ENCODE measurements at regions of chr1 and their contacts with region 1.

Region 1: DNA sequence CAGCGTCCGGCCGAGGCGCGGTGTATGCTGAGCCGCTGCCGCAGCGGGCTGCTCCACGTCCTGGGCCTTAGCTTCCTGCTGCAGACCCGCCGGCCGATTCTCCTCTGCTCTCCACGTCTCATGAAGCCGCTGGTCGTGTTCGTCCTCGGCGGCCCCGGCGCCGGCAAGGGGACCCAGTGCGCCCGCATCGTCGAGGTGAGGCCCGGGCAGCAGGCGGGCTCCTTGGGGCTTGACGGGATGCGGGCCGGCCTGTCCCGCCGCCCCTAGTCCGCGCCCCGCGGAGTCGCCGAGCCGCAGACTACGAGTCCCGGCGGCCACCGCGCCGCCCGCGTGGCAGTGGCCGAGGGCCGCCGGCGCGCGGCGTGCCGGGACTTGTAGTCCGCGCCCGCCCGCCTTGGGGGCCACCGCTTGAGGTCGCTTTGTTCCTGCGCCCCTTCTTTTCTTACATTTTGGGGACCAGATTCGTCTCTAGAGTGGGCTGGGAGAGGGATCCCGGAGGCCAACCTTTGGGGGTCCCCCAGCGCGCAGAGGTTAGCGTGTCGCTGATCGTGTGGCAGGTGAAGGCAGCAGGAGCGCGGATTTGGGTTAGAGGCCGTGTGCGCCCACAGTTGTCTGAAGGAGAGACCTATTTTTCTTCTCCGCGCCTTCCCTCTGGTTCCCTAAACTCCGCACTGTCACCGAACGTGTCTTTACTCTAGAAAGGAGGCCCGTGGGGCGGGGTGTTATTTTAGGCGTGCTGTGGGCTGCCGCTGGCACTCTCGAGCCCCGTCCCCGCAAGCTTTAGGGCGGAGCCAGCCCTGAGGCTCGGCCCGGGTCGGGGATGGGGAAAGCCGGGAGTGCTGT is 553 bp downstream of the CMPK1 start:
- DNase-seq: peak; percentile 85
- ATAC-seq: peak; percentile 90
- H3K4me3 Mint-ChIP-seq: no peak overlapping the region
- H3K27ac Mint-ChIP-seq: peak overlapping the region; percentile 88
- H3K4me1 Mint-ChIP-seq: peaks cover 23% of the 10 kb centered on the region
- H3K27me3 Mint-ChIP-seq: no peaks in the 10 kb centered on the region

Region 2: GRCh38 chr1:46603858-46604549 is 730.1 kb before region 1 on chr1 and contains the start of gene MKNK1:
- CTCF ChIA-PET with region 1: no interaction called
- POLR2A ChIA-PET with region 1: no interaction called
- intact Hi-C with region 1: loop called in 1 of 2 experiments (anchors 10 kb)
- DNase-seq: peak; percentile 99
- ATAC-seq: peak; percentile 98
- H3K4me3 Mint-ChIP-seq: peak within 1 kb of the TSS; percentile 87
- H3K27ac Mint-ChIP-seq: peak within 1 kb of the TSS; percentile 82
- H3K4me1 Mint-ChIP-seq: peaks cover 55% of the 10 kb centered on the region
- H3K27me3 Mint-ChIP-seq: no peaks in the 10 kb centered on the region
- total RNA-seq, gene MKNK1: 27.8 to 31.0 TPM

Region 3: DNA sequence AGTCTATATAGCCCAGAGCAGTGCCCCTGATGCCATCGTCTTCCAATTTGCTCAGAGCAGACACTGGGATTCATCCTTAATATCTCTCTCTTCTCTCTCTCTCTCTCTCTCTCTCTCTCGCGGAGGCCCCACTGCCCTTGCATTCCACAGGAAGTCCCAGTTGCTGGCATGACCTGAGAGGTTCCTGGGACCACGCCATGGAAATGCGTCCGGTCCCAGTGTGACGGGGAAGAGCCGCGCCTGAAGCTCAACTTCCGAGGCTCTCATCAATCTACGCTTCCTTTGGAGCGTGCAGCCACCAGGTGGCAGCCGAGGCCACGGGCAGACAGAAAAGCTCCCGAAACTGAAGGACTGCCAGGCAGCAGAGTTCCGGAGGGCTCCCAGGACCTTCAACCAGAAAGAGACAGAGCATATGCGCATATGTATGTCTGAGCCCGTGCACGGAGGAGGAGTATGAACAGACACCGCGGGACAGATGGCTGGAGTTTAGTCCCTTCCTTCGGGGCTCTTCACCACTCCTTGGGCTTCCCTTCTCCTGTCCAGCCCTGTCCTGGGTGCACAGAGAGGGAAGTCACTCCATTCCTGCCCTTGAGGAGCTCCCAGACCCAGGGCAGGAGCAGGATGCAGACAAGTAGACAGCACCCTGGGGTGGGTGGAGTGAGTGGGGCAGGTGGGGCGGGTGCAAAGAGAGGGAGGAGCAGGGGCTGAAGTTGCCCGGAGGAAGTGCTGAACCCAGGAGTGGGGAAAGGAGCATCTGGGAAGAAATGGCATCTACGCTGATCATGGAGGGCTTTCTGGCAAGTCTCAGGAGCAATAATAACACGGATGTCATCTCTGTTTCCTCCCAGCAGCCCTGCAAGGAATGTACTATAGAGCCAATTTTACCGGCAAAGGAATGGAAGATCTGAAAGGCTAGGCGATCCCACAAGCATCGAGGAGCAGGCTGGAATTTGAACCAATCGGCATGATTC is 154.8 kb before region 1 on chr1:
- CTCF ChIA-PET with region 1: interaction called, 4 read pairs
- POLR2A ChIA-PET with region 1: no interaction called
- intact Hi-C with region 1: loop called in 1 of 2 experiments (anchors 1 kb)
- DNase-seq: peak; percentile 91
- ATAC-seq: peak; percentile 90
- H3K4me3 Mint-ChIP-seq: peak overlapping the region; percentile 57
- H3K27ac Mint-ChIP-seq: no peak overlapping the region
- H3K4me1 Mint-ChIP-seq: peaks cover 8% of the 10 kb centered on the region
- H3K27me3 Mint-ChIP-seq: peaks cover 22% of the 10 kb centered on the region

Region 4: GRCh38 chr1:47313915-47314664 is 20.1 kb before region 1 on chr1 and contains the start of gene STIL:
- CTCF ChIA-PET with region 1: interaction called, 20 read pairs
- POLR2A ChIA-PET with region 1: interaction called, 31 read pairs
- intact Hi-C with region 1: loop called (anchors 1 kb)
- DNase-seq: peak; percentile 99
- ATAC-seq: peak; percentile 97
- H3K4me3 Mint-ChIP-seq: peak within 1 kb of the TSS; percentile 84
- H3K27ac Mint-ChIP-seq: peak within 1 kb of the TSS; percentile 92
- H3K4me1 Mint-ChIP-seq: peaks cover 10% of the 10 kb centered on the region
- H3K27me3 Mint-ChIP-seq: no peaks in the 10 kb centered on the region
- total RNA-seq, gene STIL: 33.9 to 36.0 TPM

Region 5: DNA sequence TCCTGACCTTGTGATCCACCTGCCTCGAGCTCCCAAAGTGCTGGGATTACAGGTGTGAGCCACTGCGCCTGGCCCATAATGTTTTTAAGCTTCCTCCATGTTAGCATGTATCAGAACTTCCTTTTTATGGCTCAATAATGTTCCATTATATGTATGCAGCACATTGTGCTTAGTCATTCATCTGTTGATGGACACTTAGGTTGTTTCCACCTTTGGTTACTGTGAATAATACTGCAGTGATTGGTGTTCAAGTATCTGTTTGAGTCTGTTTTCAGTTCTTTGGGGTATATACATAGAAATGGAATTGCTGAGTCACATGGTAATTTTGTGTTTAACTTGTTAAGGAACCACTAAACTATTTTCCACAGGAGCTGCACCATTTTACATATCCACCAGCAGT is 17.2 kb after region 1 on chr1:
- CTCF ChIA-PET with region 1: interaction called, 5 read pairs
- POLR2A ChIA-PET with region 1: no interaction called
- intact Hi-C with region 1: loop called (anchors 1 to 2 kb)
- DNase-seq: no peak
- ATAC-seq: peak; percentile 97
- H3K4me3 Mint-ChIP-seq: no peak overlapping the region
- H3K27ac Mint-ChIP-seq: peak overlapping the region; percentile 87
- H3K4me1 Mint-ChIP-seq: peaks cover 28% of the 10 kb centered on the region
- H3K27me3 Mint-ChIP-seq: no peaks in the 10 kb centered on the region

Region 6: GRCh38 chr1:47401761-47402160 is 67.6 kb after region 1 on chr1:
- CTCF ChIA-PET with region 1: no interaction called
- POLR2A ChIA-PET with region 1: interaction called, 10 read pairs
- intact Hi-C with region 1: no loop called
- DNase-seq: no peak
- ATAC-seq: no peak
- H3K4me3 Mint-ChIP-seq: no peak overlapping the region
- H3K27ac Mint-ChIP-seq: no peak overlapping the region
- H3K4me1 Mint-ChIP-seq: no peaks in the 10 kb centered on the region
- H3K27me3 Mint-ChIP-seq: peaks cover 14% of the 10 kb centered on the region

Region 7: DNA sequence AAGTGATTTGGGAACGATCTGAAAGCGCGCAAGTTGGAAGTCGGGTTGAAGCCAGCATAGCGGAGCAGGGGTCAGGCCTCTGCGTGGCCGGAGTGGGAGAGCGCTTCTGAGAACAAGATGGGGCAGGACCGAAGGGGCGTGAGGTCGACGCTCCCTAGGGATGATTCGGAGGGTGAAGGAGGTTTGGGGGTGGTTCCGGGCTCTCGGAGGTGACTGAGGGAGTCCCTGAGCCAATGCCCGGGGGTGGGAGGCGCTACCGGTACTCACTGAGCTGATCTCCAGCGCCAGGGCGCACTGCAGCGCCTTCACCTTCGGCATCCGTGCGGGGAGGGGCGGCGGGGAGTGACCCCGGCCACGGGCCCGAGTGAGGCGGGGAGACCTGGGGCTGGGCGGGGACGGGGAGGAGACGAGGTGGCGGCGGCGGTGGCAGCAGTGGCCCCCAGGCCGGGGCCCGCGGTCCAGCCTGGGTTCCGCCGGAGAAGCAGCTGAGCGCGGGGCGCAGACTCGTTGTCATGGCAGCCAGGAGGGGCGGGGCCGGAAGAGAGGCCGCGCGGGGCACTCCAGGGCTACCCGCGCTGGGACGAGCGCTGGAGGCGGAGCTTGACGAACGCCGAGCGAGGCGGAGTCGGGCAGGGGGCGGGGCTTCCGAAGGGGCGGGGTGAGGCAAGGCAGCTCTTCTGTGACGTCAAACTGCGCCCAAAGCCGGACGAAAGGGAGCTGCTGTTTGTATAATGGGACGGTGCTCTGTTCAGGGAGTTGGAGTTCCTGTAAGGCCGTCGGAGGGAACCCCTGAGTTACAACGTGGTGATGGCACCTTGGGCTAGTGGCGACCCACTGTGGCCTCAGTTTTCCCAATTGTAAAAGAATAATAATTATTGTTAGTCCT is 1137.8 kb after region 1 on chr1 and contains the start of gene SPATA6:
- CTCF ChIA-PET with region 1: no interaction called
- POLR2A ChIA-PET with region 1: no interaction called
- intact Hi-C with region 1: loop called in 1 of 2 experiments (anchors 5 kb)
- DNase-seq: peak; percentile 99
- ATAC-seq: peak; percentile 97
- H3K4me3 Mint-ChIP-seq: peak within 1 kb of the TSS; percentile 78
- H3K27ac Mint-ChIP-seq: peak within 1 kb of the TSS; percentile 49
- H3K4me1 Mint-ChIP-seq: peaks cover 25% of the 10 kb centered on the region
- H3K27me3 Mint-ChIP-seq: peaks cover 8% of the 10 kb centered on the region
- total RNA-seq, gene SPATA6: 2.8 to 3.3 TPM